Activated CD4-positive, alpha-beta T cell treated with anti-CD3 and anti-CD28 coated beads for 36 hours (primary cell): ENCODE measurements at regions of chr11 and their contacts with region 1.

Region 1: GRCh38 chr11:33893711-33894397 is 2.0 kb upstream of the LMO2 start:
- DNase-seq: peak; percentile 92
- ATAC-seq: peak; percentile 95
- H3K4me3 Mint-ChIP-seq: peak overlapping the region; percentile 1
- H3K27ac Mint-ChIP-seq: peak overlapping the region; percentile 10
- H3K4me1 Mint-ChIP-seq: peaks cover 36% of the 10 kb centered on the region
- H3K27me3 Mint-ChIP-seq: peaks cover 69% of the 10 kb centered on the region

Region 2: GRCh38 chr11:33257897-33258630 is 635.8 kb before region 1 on chr11:
- CTCF ChIA-PET with region 1: no interaction called
- POLR2A ChIA-PET with region 1: no interaction called
- intact Hi-C with region 1: loop called in 1 of 2 experiments (anchors 5 kb)
- DNase-seq: peak; percentile 86
- ATAC-seq: peak; percentile 62
- H3K4me3 Mint-ChIP-seq: peak overlapping the region; percentile 96
- H3K27ac Mint-ChIP-seq: peak overlapping the region; percentile 92
- H3K4me1 Mint-ChIP-seq: peaks cover 34% of the 10 kb centered on the region
- H3K27me3 Mint-ChIP-seq: no peaks in the 10 kb centered on the region

Region 3: GRCh38 chr11:34028425-34028824 is 134.6 kb after region 1 on chr11:
- CTCF ChIA-PET with region 1: no interaction called
- POLR2A ChIA-PET with region 1: no interaction called
- intact Hi-C with region 1: no loop called
- DNase-seq: no peak
- ATAC-seq: no peak
- H3K4me3 Mint-ChIP-seq: no peak overlapping the region
- H3K27ac Mint-ChIP-seq: no peak overlapping the region
- H3K4me1 Mint-ChIP-seq: no peaks in the 10 kb centered on the region
- H3K27me3 Mint-ChIP-seq: no peaks in the 10 kb centered on the region

Region 4: GRCh38 chr11:34105079-34105956 is 211.5 kb after region 1 on chr11 and contains the start of gene NAT10:
- CTCF ChIA-PET with region 1: no interaction called
- POLR2A ChIA-PET with region 1: no interaction called
- intact Hi-C with region 1: loop called in 1 of 2 experiments (anchors 2 kb)
- DNase-seq: peak; percentile 98
- ATAC-seq: peak; percentile 93
- H3K4me3 Mint-ChIP-seq: peak within 1 kb of the TSS; percentile 97
- H3K27ac Mint-ChIP-seq: peak within 1 kb of the TSS; percentile 99
- H3K4me1 Mint-ChIP-seq: peaks cover 57% of the 10 kb centered on the region
- H3K27me3 Mint-ChIP-seq: no peaks in the 10 kb centered on the region
- total RNA-seq, gene NAT10: 142 to 147 TPM

Region 5: GRCh38 chr11:34250732-34251639 is 357.1 kb after region 1 on chr11:
- CTCF ChIA-PET with region 1: no interaction called
- POLR2A ChIA-PET with region 1: no interaction called
- intact Hi-C with region 1: loop called (anchors 2 to 5 kb)
- DNase-seq: peak; percentile 86
- ATAC-seq: peak; percentile 98
- H3K4me3 Mint-ChIP-seq: no peak overlapping the region
- H3K27ac Mint-ChIP-seq: no peak overlapping the region
- H3K4me1 Mint-ChIP-seq: peaks cover 60% of the 10 kb centered on the region
- H3K27me3 Mint-ChIP-seq: peaks cover 20% of the 10 kb centered on the region

Region 6: GRCh38 chr11:34438529-34439507 is 545.0 kb after region 1 on chr11 and contains the start of gene CAT:
- CTCF ChIA-PET with region 1: no interaction called
- POLR2A ChIA-PET with region 1: no interaction called
- intact Hi-C with region 1: loop called in 1 of 2 experiments (anchors 2 kb)
- DNase-seq: peak; percentile 99
- ATAC-seq: peak; percentile 99
- H3K4me3 Mint-ChIP-seq: peak within 1 kb of the TSS; percentile 86
- H3K27ac Mint-ChIP-seq: peak within 1 kb of the TSS; percentile 93
- H3K4me1 Mint-ChIP-seq: peaks cover 22% of the 10 kb centered on the region
- H3K27me3 Mint-ChIP-seq: no peaks in the 10 kb centered on the region
- total RNA-seq, gene CAT: 25.1 to 25.5 TPM

Region 7: GRCh38 chr11:35173011-35173511 is 1279.2 kb after region 1 on chr11:
- CTCF ChIA-PET with region 1: no interaction called
- POLR2A ChIA-PET with region 1: no interaction called
- intact Hi-C with region 1: loop called in 1 of 2 experiments (anchors 5 kb)
- DNase-seq: no peak
- ATAC-seq: no peak
- H3K4me3 Mint-ChIP-seq: no peak overlapping the region
- H3K27ac Mint-ChIP-seq: peak overlapping the region; percentile 83
- H3K4me1 Mint-ChIP-seq: peaks cover 97% of the 10 kb centered on the region
- H3K27me3 Mint-ChIP-seq: no peaks in the 10 kb centered on the region